Mammary epithelial cell (primary cell): ENCODE measurements at regions of chr9 and their contacts with region 1.

Region 1: DNA sequence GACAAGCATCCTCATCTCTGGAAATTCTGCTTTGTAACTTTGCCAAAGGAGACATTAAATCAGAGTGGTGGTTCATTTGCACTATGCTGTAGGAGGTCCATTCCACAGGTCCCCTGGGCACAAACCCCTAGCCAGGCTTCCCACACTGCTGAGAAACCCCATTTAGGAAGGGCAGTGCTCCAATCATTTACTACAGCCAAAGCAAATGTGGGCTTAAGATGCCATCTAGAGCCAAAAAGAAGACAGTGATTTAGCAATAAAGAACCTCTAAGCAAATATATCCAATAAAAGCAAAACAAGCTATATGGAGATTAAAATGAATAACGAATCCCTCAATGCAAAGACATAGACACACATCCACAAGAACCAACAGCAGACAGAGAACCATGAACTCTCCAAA is 129.0 kb upstream of the ALDH1B1 start:
- DNase-seq: peak; percentile 31
- H3K4me3 ChIP-seq: no peak overlapping the region
- H3K27ac ChIP-seq: no peak overlapping the region
- H3K4me1 ChIP-seq: no peaks in the 10 kb centered on the region
- H3K27me3 ChIP-seq: no peaks in the 10 kb centered on the region
- CTCF ChIP-seq: peak; percentile 41 to 61

Region 2: GRCh38 chr9:37582548-37583157 is 680.9 kb before region 1 on chr9:
- CTCF ChIA-PET with region 1: no interaction called
- dilution Hi-C with region 1: no loop called
- in situ Hi-C with region 1: no loop called
- intact Hi-C with region 1: loop called (anchors 5 kb)
- DNase-seq: peak; percentile 42
- H3K4me3 ChIP-seq: no peak overlapping the region
- H3K27ac ChIP-seq: no peak overlapping the region
- H3K4me1 ChIP-seq: no peaks in the 10 kb centered on the region
- H3K27me3 ChIP-seq: no peaks in the 10 kb centered on the region
- CTCF ChIP-seq: peak; percentile 66 to 73

Region 3: GRCh38 chr9:37903647-37904444 is 359.7 kb before region 1 on chr9 and contains the start of gene SLC25A51:
- CTCF ChIA-PET with region 1: no interaction called
- dilution Hi-C with region 1: no loop called
- in situ Hi-C with region 1: loop called in 1 of 2 experiments (anchors 10 kb)
- intact Hi-C with region 1: loop called (anchors 2 kb)
- DNase-seq: peak; percentile 94
- H3K4me3 ChIP-seq: peak within 1 kb of the TSS; percentile 60 to 83 (median 78)
- H3K27ac ChIP-seq: peak within 1 kb of the TSS; percentile 67
- H3K4me1 ChIP-seq: peaks cover 25% of the 10 kb centered on the region
- H3K27me3 ChIP-seq: no peaks in the 10 kb centered on the region
- CTCF ChIP-seq: peak; percentile 92 to 98
- total RNA-seq, gene SLC25A51: 30.0 to 78.0 TPM

Region 4: GRCh38 chr9:38079461-38080031 is 184.0 kb before region 1 on chr9:
- CTCF ChIA-PET with region 1: interaction called, 3 read pairs
- dilution Hi-C with region 1: no loop called
- in situ Hi-C with region 1: loop called in 1 of 2 experiments (anchors 10 kb)
- intact Hi-C with region 1: no loop called
- DNase-seq: no peak
- H3K4me3 ChIP-seq: no peak overlapping the region
- H3K27ac ChIP-seq: no peak overlapping the region
- H3K4me1 ChIP-seq: peaks cover 3% of the 10 kb centered on the region
- H3K27me3 ChIP-seq: no peaks in the 10 kb centered on the region
- CTCF ChIP-seq: no peak

Region 5: DNA sequence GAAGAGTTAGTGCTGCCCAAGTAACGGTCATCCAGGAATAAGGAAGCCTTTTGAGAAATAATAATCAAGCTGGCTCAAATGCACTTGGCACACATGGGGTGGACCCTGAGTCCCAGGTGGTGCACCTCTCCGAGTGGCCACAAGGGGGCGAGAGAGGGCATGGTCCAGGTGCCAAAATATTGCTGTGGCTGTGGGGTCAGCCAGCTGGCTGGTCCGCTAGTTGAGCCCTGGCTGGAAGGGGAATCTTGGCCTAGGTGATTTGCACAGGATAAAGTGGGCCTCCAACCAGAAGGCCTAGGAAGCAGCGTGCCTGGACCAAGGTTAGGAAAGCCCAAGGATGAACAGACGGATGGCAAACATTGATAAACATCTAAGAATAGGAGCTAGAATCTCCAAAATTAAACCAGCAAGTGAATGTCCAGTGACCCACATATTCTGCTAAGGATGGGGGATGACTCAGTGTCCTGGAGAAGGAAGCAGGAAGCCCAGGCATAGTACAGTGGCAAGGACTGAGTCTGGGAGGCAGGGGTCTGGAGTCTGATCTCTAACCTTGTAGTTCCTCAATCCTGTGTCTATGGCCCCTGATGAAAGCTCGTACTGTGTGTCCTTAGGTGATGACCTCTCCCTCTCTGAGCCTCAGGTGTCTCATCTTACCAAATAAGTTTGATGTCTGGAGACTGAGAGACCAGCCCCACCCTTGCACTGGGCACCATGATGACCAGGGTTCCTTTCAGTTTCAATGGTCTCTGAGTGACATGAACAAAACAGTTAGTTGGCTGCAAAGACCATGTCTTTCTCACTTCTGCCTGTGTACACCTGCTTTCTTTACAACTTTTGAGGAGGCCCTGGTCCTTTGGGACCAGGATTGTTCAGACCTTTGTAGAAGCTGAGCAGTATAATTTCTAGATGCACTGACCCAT is 175.3 kb before region 1 on chr9:
- CTCF ChIA-PET with region 1: interaction called, 3 read pairs
- dilution Hi-C with region 1: no loop called
- in situ Hi-C with region 1: no loop called
- intact Hi-C with region 1: loop called (anchors 1 kb)
- DNase-seq: peak; percentile 32
- H3K4me3 ChIP-seq: no peak overlapping the region
- H3K27ac ChIP-seq: no peak overlapping the region
- H3K4me1 ChIP-seq: peaks cover 1% of the 10 kb centered on the region
- H3K27me3 ChIP-seq: no peaks in the 10 kb centered on the region
- CTCF ChIP-seq: peak; percentile 93 to 98